ENCODE measurements at regions of chr1 and their contacts with region 1.

Region 1: GRCh38 chr1:176206961-176207902 is at the start of gene COP1:
- DNase-seq: peak; percentile 93 to 98 (median 97)
- ATAC-seq: peak; percentile 86 to 90 (median 88)
- H3K4me3 ChIP-seq: peak within 1 kb of the TSS; percentile 86 to 99
- H3K4me3 Mint-ChIP-seq: peak within 1 kb of the TSS; percentile 95 to 99 (median 98)
- H3K27ac ChIP-seq: peak within 1 kb of the TSS; percentile 92
- H3K27ac Mint-ChIP-seq: peak within 1 kb of the TSS; percentile 99 to 100
- H3K4me1 ChIP-seq: peaks cover 14 to 19% of the 10 kb centered on the region in 2 experiments
- H3K4me1 Mint-ChIP-seq: peaks cover 47 to 53% (median 47%) of the 10 kb centered on the region in 3 donors
- H3K27me3 ChIP-seq: no peaks in the 10 kb centered on the region
- H3K27me3 Mint-ChIP-seq: no peaks in the 10 kb centered on the region
- total RNA-seq, gene COP1: 38.7 to 49.0 (median 42.4) TPM

Region 2: GRCh38 chr1:176122282-176122681 is 85.0 kb before region 1 on chr1:
- CTCF ChIA-PET with region 1: no interaction called
- POLR2A ChIA-PET with region 1: no interaction called
- DNase-seq: no peak
- ATAC-seq: no peak
- H3K4me3 ChIP-seq: no peak overlapping the region
- H3K4me3 Mint-ChIP-seq: no peak overlapping the region
- H3K27ac ChIP-seq: no peak overlapping the region
- H3K27ac Mint-ChIP-seq: no peak overlapping the region
- H3K4me1 ChIP-seq: no peaks in the 10 kb centered on the region
- H3K4me1 Mint-ChIP-seq: peaks cover under 1 to 2% (median under 1%) of the 10 kb centered on the region in 3 donors
- H3K27me3 ChIP-seq: no peaks in the 10 kb centered on the region
- H3K27me3 Mint-ChIP-seq: no peaks in the 10 kb centered on the region

Region 3: GRCh38 chr1:176183618-176184017 is 23.6 kb before region 1 on chr1:
- CTCF ChIA-PET with region 1: no interaction called
- POLR2A ChIA-PET with region 1: interaction called in 1 of 2 experiments, 12 read pairs
- DNase-seq: no peak
- ATAC-seq: no peak
- H3K4me3 ChIP-seq: no peak overlapping the region
- H3K4me3 Mint-ChIP-seq: no peak overlapping the region
- H3K27ac ChIP-seq: no peak overlapping the region
- H3K27ac Mint-ChIP-seq: peak overlapping the region in 1 of 2 donors; percentile 54
- H3K4me1 ChIP-seq: peaks cover 0 to 2% of the 10 kb centered on the region in 2 experiments
- H3K4me1 Mint-ChIP-seq: peaks cover 55 to 61% (median 56%) of the 10 kb centered on the region in 3 donors
- H3K27me3 ChIP-seq: no peaks in the 10 kb centered on the region
- H3K27me3 Mint-ChIP-seq: no peaks in the 10 kb centered on the region

Measured in T-cell (primary cell).